Activated CD8-positive, alpha-beta T cell treated with anti-CD3 and anti-CD28 coated beads for 36 hours (primary cell): ENCODE measurements at regions of chr19 and their contacts with region 1.

Region 1: DNA sequence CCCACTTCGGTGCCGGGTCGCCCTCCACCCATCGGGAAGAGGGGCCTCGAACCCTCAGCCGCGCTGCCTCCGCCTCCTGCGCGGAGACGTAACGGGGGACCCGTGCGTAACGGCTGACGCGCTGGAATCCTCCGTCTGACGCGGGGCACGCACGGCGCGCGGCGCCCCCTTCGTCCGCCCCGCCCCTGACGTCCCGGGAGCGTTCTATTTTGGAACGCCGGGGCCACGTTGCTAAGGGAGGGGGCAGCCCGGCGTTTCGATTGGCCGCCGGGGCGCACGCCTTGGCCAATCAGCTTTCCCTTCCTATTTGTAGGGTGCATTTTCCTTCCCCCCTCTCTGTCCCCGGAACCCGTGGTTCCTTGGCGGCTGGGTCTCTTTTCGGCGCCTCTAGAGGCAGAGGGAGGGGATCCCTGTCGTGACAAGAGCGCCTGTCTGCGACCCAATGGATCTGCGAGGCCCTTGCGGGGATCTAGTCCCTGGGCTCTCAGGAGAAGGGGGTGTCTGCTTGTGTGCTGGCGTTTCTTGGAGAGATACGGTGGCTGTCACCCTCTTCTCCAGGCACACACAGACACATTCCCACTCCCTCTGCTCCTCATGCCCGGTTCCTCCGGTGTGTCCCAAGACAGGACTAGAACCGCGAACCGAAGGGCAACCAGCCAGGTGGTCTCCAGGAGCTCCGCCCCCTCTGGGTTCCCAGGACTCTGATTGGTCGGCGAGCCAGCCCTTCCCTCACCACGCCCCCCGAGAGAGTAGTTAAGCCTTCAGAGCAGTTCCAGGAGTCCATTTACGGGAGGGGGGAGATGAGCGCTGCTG is 1.5 kb downstream of the FOSB start:
- DNase-seq: peak; percentile 96
- ATAC-seq: peak; percentile 75
- H3K4me3 Mint-ChIP-seq: peak overlapping the region; percentile 86
- H3K27ac Mint-ChIP-seq: peak overlapping the region; percentile 93
- H3K4me1 Mint-ChIP-seq: peaks cover 34% of the 10 kb centered on the region
- H3K27me3 Mint-ChIP-seq: peaks cover 5% of the 10 kb centered on the region
- CTCF ChIP-seq: no peak

Region 2: GRCh38 chr19:45202637-45203036 is 266.7 kb before region 1 on chr19:
- CTCF ChIA-PET with region 1: no interaction called
- POLR2A ChIA-PET with region 1: no interaction called
- intact Hi-C with region 1: no loop called
- DNase-seq: no peak
- ATAC-seq: no peak
- H3K4me3 Mint-ChIP-seq: no peak overlapping the region
- H3K27ac Mint-ChIP-seq: no peak overlapping the region
- H3K4me1 Mint-ChIP-seq: no peaks in the 10 kb centered on the region
- H3K27me3 Mint-ChIP-seq: no peaks in the 10 kb centered on the region
- CTCF ChIP-seq: no peak

Region 3: GRCh38 chr19:45346449-45346848 is 122.9 kb before region 1 on chr19:
- CTCF ChIA-PET with region 1: no interaction called
- POLR2A ChIA-PET with region 1: no interaction called
- intact Hi-C with region 1: no loop called
- DNase-seq: no peak
- ATAC-seq: no peak
- H3K4me3 Mint-ChIP-seq: no peak overlapping the region
- H3K27ac Mint-ChIP-seq: no peak overlapping the region
- H3K4me1 Mint-ChIP-seq: no peaks in the 10 kb centered on the region
- H3K27me3 Mint-ChIP-seq: peaks cover 16% of the 10 kb centered on the region
- CTCF ChIP-seq: no peak

Region 4: GRCh38 chr19:45450012-45450333 is 19.4 kb before region 1 on chr19:
- CTCF ChIA-PET with region 1: interaction called, 9 read pairs
- POLR2A ChIA-PET with region 1: interaction called, 16 read pairs
- intact Hi-C with region 1: no loop called
- DNase-seq: no peak
- ATAC-seq: peak; percentile 20
- H3K4me3 Mint-ChIP-seq: peak overlapping the region; percentile 77
- H3K27ac Mint-ChIP-seq: peak overlapping the region; percentile 91
- H3K4me1 Mint-ChIP-seq: peaks cover 34% of the 10 kb centered on the region
- H3K27me3 Mint-ChIP-seq: no peaks in the 10 kb centered on the region
- CTCF ChIP-seq: no peak

Region 5: DNA sequence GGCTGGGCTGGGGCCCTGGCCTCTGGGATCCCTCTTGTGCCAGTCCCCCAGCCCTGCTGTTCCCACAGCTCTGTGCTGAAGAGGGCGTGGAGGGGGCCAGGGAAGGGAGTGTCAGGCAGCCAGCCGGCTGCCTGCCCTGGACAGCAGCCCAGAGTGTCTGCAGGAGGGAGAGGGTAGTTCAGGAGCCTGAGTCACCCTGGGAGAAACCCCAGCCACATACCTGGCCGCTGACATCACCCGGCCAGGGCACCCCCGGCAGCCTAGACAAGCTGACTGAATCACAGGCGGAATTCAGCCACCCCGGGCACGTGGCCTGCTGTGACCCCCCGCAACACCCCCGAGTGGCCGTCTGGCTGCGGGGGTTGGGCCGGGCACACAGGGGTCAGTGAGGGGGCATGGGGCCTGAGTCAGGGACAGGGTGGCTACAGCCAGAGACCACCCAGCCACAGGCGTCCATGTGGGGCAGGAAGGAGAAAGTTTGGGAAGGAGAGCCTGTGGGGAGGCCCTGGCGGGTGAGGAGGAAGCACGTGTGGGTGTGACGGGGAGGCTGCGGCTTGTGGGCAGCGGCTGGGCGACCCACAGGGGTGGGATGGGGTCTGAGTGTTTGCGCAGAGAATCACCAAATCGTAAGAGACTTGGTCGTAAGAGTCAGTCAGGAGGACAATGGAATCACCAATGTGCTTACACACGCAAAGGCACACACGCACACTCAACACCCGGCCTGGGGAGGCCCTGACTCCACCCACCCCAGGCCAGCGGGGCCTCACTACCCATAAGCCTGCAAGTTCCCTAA is 13.4 kb before region 1 on chr19:
- CTCF ChIA-PET with region 1: interaction called, 5 read pairs
- POLR2A ChIA-PET with region 1: interaction called, 16 read pairs
- intact Hi-C with region 1: no loop called
- DNase-seq: peak; percentile 86
- ATAC-seq: peak; percentile 84
- H3K4me3 Mint-ChIP-seq: peak overlapping the region; percentile 37
- H3K27ac Mint-ChIP-seq: peak overlapping the region; percentile 78
- H3K4me1 Mint-ChIP-seq: peaks cover 28% of the 10 kb centered on the region
- H3K27me3 Mint-ChIP-seq: no peaks in the 10 kb centered on the region
- CTCF ChIP-seq: no peak

Region 6: GRCh38 chr19:45506246-45506990 is 37.1 kb after region 1 on chr19:
- CTCF ChIA-PET with region 1: no interaction called
- POLR2A ChIA-PET with region 1: no interaction called
- intact Hi-C with region 1: no loop called
- DNase-seq: peak; percentile 100
- ATAC-seq: peak; percentile 83
- H3K4me3 Mint-ChIP-seq: peak overlapping the region; percentile 96
- H3K27ac Mint-ChIP-seq: peak overlapping the region; percentile 95
- H3K4me1 Mint-ChIP-seq: peaks cover 33% of the 10 kb centered on the region
- H3K27me3 Mint-ChIP-seq: no peaks in the 10 kb centered on the region
- CTCF ChIP-seq: peak; percentile 45

Region 7: DNA sequence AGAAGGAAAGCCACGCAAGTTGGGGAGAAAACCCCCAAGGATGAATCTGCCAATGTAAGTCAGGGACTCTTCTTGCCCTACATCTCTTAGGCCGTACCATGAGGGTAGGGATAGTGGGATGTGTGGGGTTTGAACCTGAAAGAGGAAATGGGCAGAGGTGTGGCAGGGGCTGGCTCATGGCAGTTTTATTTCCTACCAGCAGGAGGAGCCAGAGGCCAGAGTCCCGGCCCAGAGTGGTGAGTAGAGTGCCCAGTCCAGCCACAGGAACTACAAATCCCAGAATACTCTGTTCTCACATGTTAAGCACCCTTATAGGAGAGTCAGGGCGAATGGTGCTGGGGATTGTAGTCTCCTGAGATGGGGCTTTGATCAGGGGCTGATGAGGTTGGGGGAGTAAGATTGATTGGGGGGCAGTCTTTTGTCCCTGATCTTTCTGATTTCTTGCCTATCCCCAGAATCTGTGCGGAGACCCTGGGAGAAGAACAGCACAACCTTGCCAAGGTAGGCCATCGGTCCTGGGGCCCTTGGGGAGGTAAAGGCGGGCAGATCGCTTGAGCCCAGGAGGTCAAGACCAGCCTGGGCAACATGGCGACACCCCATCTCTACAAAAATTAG is 54.4 kb after region 1 on chr19:
- CTCF ChIA-PET with region 1: no interaction called
- POLR2A ChIA-PET with region 1: no interaction called
- intact Hi-C with region 1: no loop called
- DNase-seq: peak; percentile 82
- ATAC-seq: peak; percentile 98
- H3K4me3 Mint-ChIP-seq: no peak overlapping the region
- H3K27ac Mint-ChIP-seq: peak overlapping the region; percentile 58
- H3K4me1 Mint-ChIP-seq: peaks cover 14% of the 10 kb centered on the region
- H3K27me3 Mint-ChIP-seq: no peaks in the 10 kb centered on the region
- CTCF ChIP-seq: peak; percentile 79